RWPE1 (cell line): ENCODE measurements at regions of chr1 and their contacts with region 1.

Region 1: GRCh38 chr1:205977402-205978014 is 25.7 kb downstream of the RAB7B start:
- DNase-seq: peak; percentile 73
- H3K27ac ChIP-seq: peak overlapping the region; percentile 76
- CTCF ChIP-seq: peak; percentile 94

Region 2: DNA sequence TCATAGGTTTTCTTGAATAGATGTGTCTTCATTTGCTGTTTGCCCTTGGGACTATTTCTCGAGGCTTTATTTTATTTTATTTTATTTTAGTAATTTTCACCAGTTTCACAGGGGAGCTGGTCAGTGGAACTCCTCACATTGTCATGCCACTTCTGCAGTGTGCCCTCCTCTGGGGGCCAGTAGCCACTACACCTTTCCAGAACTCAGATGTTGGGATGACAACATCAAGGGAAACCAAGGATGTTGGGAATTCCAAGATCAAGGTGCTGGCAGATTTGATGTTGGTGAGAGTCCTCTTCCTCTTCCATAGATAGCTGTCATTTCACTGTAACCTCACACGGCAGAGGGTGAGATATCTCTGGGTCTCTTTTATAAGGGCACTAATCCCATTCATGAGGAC is 69.7 kb before region 1 on chr1:
- CTCF ChIA-PET with region 1: interaction called, 406 read pairs
- POLR2A ChIA-PET with region 1: no interaction called
- DNase-seq: peak; percentile 52
- H3K27ac ChIP-seq: no peak overlapping the region
- CTCF ChIP-seq: no peak; the same call in 1 of the 2 replicates

Region 3: DNA sequence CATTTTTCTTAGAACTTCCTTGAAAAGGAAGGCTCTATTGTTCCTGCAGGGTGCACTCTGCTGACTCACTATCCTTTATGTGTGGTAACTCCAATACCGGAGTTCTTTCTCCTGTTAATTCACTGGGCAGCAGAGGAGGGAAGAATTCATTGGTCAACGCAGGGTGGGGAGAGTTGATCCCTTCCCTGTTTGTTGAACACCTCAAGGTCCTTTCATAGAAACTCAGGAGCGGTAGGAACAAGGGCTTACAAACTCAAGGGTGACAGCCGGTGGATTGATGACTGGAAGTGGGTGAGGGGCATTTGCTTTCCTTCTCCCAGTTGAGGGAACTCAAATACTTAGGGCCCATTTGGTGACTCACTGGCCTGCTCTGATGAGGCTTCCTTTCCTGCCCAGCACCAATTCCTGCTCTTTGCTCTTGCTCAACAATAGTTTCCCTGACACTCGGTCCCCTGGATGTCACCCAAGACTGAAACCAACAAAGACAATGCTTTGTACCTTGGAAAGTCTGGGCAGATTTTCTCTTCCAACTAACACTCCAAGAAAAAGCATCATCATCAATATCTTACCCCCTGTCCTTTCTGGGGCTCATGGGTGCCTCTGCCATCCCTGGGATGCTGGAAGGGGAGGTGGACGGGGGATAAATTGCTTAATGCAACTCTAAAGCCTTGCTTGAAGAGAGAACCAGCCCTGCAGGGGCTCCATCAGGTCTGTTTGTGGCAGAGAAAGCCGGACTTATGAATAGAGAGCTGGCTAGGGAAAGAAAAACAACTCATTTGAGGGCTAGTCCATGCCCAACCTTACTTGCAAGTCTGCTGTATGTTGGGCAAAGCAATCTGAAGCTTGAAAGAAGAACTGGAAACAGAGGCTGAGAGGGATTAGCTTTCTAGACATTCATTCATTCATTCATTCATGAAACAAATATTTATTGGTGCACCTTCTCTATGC is 43.6 kb before region 1 on chr1:
- CTCF ChIA-PET with region 1: interaction called, 45 read pairs
- POLR2A ChIA-PET with region 1: no interaction called
- DNase-seq: peak; percentile 85
- H3K27ac ChIP-seq: peak overlapping the region; percentile 57
- CTCF ChIP-seq: no peak

Region 4: DNA sequence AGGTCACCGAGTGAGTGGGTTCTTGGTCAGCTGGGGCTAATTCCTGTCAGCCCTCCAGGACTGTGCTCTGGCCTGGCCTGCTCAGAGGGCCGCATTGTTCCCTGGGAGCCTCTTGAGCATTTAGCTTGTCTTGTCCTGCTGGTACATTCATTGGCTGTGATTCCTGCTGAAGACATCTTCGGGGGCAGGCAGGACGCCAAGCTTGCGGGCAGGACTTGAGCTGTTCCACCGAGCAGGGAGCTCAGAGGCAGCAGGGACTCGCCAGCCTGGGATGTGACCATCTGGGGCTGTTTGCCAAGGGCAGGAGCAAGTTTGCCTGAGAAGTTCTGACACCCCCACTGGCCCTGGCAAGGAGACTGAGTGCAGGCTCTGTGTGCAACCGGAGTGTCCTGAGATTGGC is 27.2 kb before region 1 on chr1:
- CTCF ChIA-PET with region 1: interaction called, 74 read pairs
- POLR2A ChIA-PET with region 1: no interaction called
- DNase-seq: peak; percentile 73
- H3K27ac ChIP-seq: peak overlapping the region; percentile 99
- CTCF ChIP-seq: no peak

Region 5: GRCh38 chr1:205991237-205991636 is 13.7 kb after region 1 on chr1:
- CTCF ChIA-PET with region 1: interaction called, 22 read pairs
- POLR2A ChIA-PET with region 1: no interaction called
- DNase-seq: no peak
- H3K27ac ChIP-seq: no peak overlapping the region
- CTCF ChIP-seq: no peak

Region 6: DNA sequence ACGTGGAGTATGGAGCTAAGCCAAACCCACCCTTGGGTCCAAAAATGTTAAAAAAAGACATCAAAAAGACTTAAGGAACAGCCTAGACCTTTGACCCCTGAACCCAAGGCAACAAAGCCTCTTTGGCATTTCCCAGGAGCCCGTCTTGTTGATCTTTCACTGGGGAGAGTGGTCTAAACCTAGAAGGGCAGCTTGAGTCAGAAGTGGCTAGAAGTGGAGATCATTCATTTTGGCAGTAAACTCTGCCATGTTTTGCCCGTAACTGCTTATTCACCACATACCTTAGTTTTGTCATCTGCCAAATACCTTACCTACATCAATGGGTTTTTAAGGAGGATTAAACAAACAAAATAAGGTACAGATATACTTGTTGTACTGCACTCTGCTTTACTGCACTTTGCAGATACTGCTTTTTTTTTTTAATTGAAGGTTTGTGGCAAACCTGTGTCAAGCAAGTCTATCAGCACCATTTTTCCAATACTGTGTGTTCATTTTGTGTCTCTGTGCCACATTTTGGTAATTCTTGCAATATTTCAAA is 47.8 kb after region 1 on chr1:
- CTCF ChIA-PET with region 1: interaction called, 10 read pairs
- POLR2A ChIA-PET with region 1: no interaction called
- DNase-seq: no peak
- H3K27ac ChIP-seq: no peak overlapping the region
- CTCF ChIP-seq: no peak